ENCODE measurements at regions of chr2 and their contacts with region 1.

Region 1: DNA sequence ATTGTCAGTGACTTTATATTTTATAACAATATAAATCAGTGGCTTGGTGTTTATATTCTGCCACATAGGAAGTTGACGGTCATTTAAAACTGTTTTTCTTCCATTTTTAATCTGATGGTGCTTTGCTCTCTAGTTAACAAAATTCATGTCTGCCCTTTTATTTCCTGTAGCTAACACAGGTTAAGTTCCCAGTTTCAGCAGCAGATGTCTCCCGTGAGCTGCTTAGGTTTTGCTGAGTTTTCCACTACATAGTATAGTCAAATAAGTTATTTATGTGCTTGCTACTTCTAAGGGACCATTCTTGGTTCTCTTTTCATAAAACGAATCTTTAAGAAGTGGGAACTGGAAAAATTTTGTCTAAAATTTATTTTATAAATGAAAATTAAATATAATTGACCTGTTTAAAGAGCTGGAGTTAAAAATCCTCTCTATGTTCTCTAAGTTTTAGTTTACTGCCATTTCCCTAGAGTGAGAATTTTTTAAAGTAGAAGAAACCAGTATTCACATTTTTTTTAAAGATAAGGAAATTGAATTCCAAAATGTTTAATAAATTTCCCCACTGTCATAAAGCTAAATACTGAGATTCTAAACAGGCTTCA is 20.6 kb downstream of the HTR2B start:
- DNase-seq: peak; percentile 55
- ATAC-seq: peak; percentile 96
- H3K4me3 ChIP-seq: no peak overlapping the region
- H3K27ac ChIP-seq: no peak overlapping the region
- H3K4me1 ChIP-seq: no peaks in the 10 kb centered on the region
- H3K27me3 ChIP-seq: no peaks in the 10 kb centered on the region
- CTCF ChIP-seq: peak; percentile 74 to 85 (median 81)
- EP300 ChIP-seq: no peak
- POLR2A ChIP-seq: no peak
- RAD21 ChIP-seq: peak; percentile 97

Region 2: GRCh38 chr2:231124838-231125568 is 20.8 kb after region 1 on chr2 and contains the start of gene HTR2B:
- CTCF ChIA-PET with region 1: interaction called, 15 read pairs
- POLR2A ChIA-PET with region 1: interaction called, 3 read pairs
- RAD21 ChIA-PET with region 1: interaction called, 13 read pairs
- SMC1A ChIA-PET with region 1: interaction called, 12 read pairs
- in situ Hi-C with region 1: no loop called
- intact Hi-C with region 1: no loop called
- DNase-seq: no peak
- ATAC-seq: no peak
- H3K4me3 ChIP-seq: no peak within 1 kb of the TSS; the same call in 1 of the 2 replicates
- H3K27ac ChIP-seq: peak within 1 kb of the TSS; percentile 6; the same call in 1 of the 2 replicates
- H3K4me1 ChIP-seq: peaks cover 11% of the 10 kb centered on the region
- H3K27me3 ChIP-seq: no peaks in the 10 kb centered on the region
- CTCF ChIP-seq: no peak
- EP300 ChIP-seq: no peak
- POLR2A ChIP-seq: no peak
- RAD21 ChIP-seq: no peak
- polyA plus RNA-seq, gene HTR2B: 0.20 to 0.35 TPM

Region 3: GRCh38 chr2:231191896-231192872 is 88.0 kb after region 1 on chr2:
- CTCF ChIA-PET with region 1: interaction called, 66 read pairs
- POLR2A ChIA-PET with region 1: no interaction called
- RAD21 ChIA-PET with region 1: interaction called, 29 read pairs
- SMC1A ChIA-PET with region 1: interaction called, 13 read pairs
- in situ Hi-C with region 1: no loop called
- intact Hi-C with region 1: loop called (anchors 10 kb)
- DNase-seq: no peak
- ATAC-seq: peak; percentile 68
- H3K4me3 ChIP-seq: no peak overlapping the region
- H3K27ac ChIP-seq: no peak overlapping the region
- H3K4me1 ChIP-seq: no peaks in the 10 kb centered on the region
- H3K27me3 ChIP-seq: no peaks in the 10 kb centered on the region
- CTCF ChIP-seq: peak; percentile 15 to 24 (median 18); a peak in 2 of 6 replicates
- EP300 ChIP-seq: no peak
- POLR2A ChIP-seq: no peak
- RAD21 ChIP-seq: no peak

Region 4: DNA sequence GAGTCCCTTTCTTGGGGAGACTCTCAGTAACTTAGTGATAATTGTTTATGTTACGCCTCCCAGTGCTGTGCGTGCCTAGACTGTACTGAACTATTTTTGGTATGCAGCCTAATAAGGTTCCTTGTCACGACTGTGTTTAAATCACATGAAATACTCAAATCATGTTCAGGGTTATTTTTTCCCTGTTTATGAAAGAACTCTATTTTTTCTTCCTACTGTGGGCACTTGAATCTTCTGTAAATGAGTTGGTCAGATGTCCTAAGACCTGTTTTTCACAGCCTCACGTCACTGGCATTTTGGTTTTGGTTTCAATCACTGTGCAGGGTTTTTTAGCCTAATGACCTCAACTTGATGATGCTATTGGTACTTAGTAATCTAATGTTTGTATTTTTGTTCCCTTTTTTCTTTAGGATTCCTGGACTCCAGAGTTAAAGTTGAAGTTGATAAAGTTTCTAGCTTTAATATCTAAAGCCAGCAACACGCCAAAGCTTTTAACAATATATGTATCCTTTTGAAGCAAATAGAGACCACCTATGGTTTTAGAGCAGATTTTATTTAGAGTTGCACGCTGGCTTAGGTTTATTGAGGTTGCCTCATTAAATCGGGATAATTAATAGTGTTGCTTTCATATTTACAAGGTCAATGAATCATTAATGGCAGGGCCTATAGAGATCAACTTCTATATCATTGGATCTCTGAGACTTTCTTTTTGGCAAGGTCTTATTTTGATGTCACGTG is 118.3 kb after region 1 on chr2:
- CTCF ChIA-PET with region 1: interaction called, 75 read pairs
- POLR2A ChIA-PET with region 1: no interaction called
- RAD21 ChIA-PET with region 1: interaction called, 47 read pairs
- SMC1A ChIA-PET with region 1: interaction called, 54 read pairs
- in situ Hi-C with region 1: no loop called
- intact Hi-C with region 1: loop called (anchors 2 kb)
- DNase-seq: peak; percentile 72
- ATAC-seq: peak; percentile 91
- H3K4me3 ChIP-seq: no peak overlapping the region
- H3K27ac ChIP-seq: peak overlapping the region; percentile 60
- H3K4me1 ChIP-seq: peaks cover 4% of the 10 kb centered on the region
- H3K27me3 ChIP-seq: no peaks in the 10 kb centered on the region
- CTCF ChIP-seq: 0 out of 6 replicates have a peak, but pooled peaks of 1 of the 3 experiments have one; percentile 8
- EP300 ChIP-seq: peak; percentile 94 to 99
- POLR2A ChIP-seq: no peak
- RAD21 ChIP-seq: no peak

Region 5: DNA sequence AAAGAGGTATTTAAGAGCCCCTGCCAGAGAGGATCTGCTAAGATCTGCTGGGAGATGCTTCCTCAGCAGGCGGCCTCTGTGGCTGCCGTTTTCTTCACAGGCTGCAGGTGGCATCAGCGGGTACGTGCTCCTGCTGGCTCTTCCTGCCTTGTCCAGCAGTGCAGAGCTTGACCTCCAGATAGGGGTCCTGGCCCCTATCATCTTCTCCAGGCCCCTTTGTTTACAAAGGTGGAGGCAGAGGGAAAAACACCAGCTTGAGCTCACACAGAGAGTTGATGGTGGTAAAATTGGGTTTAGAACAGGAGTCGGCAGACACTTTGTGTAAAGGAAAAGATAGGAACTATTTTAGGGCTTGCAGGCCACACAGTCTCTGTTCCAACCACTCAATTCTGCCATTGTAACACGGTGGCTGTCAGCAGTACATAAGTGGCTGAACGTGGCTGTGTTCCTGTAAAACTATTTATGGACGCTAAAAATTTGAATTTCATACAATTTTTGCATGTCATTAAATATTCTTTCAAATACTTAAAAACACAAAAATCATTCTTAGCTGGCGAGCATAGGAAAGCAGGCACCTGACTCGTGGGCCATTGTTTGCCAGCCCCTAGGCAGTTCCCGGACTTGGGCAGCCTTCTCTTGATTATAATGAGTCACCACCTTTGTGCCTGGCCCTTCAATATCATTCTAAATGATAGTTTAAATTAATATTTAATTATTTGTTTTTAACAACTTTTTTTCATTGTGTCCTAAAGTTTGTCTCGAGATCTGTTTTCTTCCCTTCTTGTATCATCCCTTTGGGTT is 193.1 kb after region 1 on chr2:
- CTCF ChIA-PET with region 1: interaction called, 11 read pairs
- POLR2A ChIA-PET with region 1: no interaction called
- RAD21 ChIA-PET with region 1: interaction called, 3 read pairs
- SMC1A ChIA-PET with region 1: interaction called, 10 read pairs
- in situ Hi-C with region 1: no loop called
- intact Hi-C with region 1: loop called (anchors 5 kb)
- DNase-seq: peak; percentile 36
- ATAC-seq: peak; percentile 81
- H3K4me3 ChIP-seq: no peak overlapping the region
- H3K27ac ChIP-seq: no peak overlapping the region
- H3K4me1 ChIP-seq: peaks cover 40% of the 10 kb centered on the region
- H3K27me3 ChIP-seq: no peaks in the 10 kb centered on the region
- CTCF ChIP-seq: peak; percentile 73 to 90 (median 81)
- EP300 ChIP-seq: no peak
- POLR2A ChIP-seq: no peak
- RAD21 ChIP-seq: peak; percentile 59

Region 6: DNA sequence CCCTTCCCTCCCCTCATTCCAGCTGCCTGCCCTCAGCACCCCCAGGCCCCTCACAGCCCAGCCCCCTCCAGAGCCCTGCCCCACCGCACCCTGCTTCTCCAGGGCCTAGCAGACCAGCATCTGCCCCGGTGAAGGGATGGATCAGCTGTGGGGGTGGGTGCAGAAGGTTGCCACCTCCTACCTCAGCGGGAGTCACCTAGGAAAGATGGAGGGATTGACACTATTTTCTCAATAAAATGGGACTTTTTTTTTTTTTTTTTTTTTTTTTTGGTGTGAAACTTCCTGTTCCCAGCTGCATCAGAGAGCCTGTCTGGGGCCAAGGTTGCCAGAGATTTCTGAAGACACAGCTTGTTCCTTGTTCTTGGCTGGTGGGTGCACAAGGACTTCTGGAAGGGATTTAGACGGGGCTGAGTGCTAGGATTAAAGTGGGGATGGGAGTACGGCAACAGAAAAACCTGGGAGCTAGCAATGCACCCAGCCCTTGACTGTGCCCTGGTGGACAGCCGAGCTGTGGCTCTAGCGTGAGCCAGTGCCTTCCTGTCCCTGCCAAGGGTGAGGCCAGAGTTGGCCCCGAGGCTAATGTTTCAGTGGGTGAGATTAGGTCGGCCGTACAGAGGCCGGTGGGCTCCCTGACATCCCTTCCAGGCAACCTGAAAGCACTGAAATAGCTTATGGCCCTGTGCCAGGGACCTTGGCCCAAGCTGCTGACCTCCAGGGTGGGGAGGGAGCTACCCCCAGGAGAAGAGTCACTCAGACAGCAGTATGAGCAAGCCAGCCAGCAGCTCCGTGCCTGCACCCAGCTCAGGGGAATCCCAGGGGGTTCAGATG is 295.9 kb after region 1 on chr2:
- CTCF ChIA-PET with region 1: interaction called, 114 read pairs
- POLR2A ChIA-PET with region 1: no interaction called
- RAD21 ChIA-PET with region 1: interaction called, 26 read pairs
- SMC1A ChIA-PET with region 1: interaction called, 44 read pairs
- in situ Hi-C with region 1: no loop called
- intact Hi-C with region 1: no loop called
- DNase-seq: no peak
- ATAC-seq: peak; percentile 46
- H3K4me3 ChIP-seq: no peak overlapping the region
- H3K27ac ChIP-seq: no peak overlapping the region
- H3K4me1 ChIP-seq: peaks cover 22% of the 10 kb centered on the region
- H3K27me3 ChIP-seq: no peaks in the 10 kb centered on the region
- CTCF ChIP-seq: no peak
- EP300 ChIP-seq: no peak
- POLR2A ChIP-seq: no peak
- RAD21 ChIP-seq: no peak

Region 7: DNA sequence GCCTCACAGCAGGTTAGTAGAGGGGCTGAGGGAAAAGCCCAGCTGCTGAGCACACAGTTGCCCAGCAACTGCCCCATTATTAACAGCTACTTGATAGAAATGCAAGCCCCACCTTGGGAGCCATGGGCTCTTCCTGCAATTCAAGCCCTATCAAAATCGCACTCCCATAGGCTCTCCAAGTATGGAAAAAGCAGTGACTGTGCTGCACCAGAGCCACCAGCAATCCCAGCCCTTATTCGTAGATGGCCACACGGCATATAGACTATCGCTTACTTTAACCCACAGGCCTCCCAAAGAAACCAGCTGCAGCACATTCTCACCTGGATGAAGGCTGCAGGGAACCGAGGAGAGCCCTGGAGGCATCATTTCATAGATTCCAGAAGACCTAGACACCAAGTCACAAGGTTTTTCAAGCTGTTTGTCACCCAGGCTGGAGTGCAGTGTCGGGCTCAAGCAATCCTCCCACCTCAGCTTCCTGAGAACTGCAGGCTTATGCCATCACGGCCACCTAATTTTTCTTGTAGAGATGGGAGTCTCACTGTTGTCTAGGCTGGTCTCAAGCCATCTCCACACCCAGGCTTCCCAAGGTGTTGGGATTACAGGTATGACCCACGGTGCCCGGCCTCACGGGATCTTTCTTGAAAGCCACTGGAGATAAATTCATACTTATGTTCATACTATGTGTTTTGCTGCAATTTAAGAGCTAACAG is 348.7 kb after region 1 on chr2:
- CTCF ChIA-PET with region 1: interaction called, 42 read pairs
- POLR2A ChIA-PET with region 1: no interaction called
- RAD21 ChIA-PET with region 1: interaction called, 14 read pairs
- SMC1A ChIA-PET with region 1: interaction called, 31 read pairs
- in situ Hi-C with region 1: no loop called
- intact Hi-C with region 1: loop called (anchors 2 kb)
- DNase-seq: no peak
- ATAC-seq: peak; percentile 13
- H3K4me3 ChIP-seq: no peak overlapping the region
- H3K27ac ChIP-seq: no peak overlapping the region
- H3K4me1 ChIP-seq: no peaks in the 10 kb centered on the region
- H3K27me3 ChIP-seq: no peaks in the 10 kb centered on the region
- CTCF ChIP-seq: no peak
- EP300 ChIP-seq: no peak
- POLR2A ChIP-seq: peak; percentile 65
- RAD21 ChIP-seq: no peak

Measured in GM12878 (cell line).